Naive thymus-derived CD4-positive, alpha-beta T cell (primary cell): ENCODE measurements at regions of chr5 and their contacts with region 1.

Region 1: DNA sequence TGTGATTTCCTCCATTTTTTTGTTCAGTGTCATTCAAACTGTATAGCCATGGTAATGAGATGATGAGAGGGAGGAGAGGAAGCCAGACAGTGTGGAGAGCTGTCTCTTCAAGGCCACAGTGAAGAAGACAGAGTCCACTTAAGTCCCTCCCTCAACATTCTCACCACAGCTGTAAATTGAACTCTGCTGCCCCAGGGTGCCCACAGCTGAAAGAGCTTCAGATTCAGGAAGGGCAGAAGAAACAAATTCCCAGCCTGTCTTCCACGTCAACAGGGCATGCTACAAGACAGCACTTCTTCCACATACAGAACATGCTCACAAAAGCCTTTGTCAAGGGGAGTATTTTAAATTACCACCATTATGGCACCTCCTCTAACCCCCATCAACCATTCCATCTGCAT is 100.4 kb downstream of the KLHL3 start:
- DNase-seq: no peak
- ATAC-seq: no peak
- H3K4me3 ChIP-seq: no peak overlapping the region
- H3K4me3 Mint-ChIP-seq: no peak overlapping the region
- H3K27ac ChIP-seq: no peak overlapping the region
- H3K27ac Mint-ChIP-seq: peak overlapping the region in 2 of 9 donors; percentile 24 to 28
- H3K4me1 ChIP-seq: no peaks in the 10 kb centered on the region
- H3K4me1 Mint-ChIP-seq: peaks cover 0 to 1% (median 0%) of the 10 kb centered on the region in 7 donors
- H3K27me3 ChIP-seq: no peaks in the 10 kb centered on the region
- H3K27me3 Mint-ChIP-seq: no peaks in the 10 kb centered on the region

Region 2: GRCh38 chr5:137743031-137743640 is 107.6 kb after region 1 on chr5:
- CTCF ChIA-PET with region 1: interaction called, 33 read pairs
- POLR2A ChIA-PET with region 1: no interaction called
- intact Hi-C with region 1: no loop called
- DNase-seq: peak in 8 of 9 donors; percentile 34 to 77 (median 72)
- ATAC-seq: peak; percentile 93
- H3K4me3 ChIP-seq: no peak overlapping the region
- H3K4me3 Mint-ChIP-seq: peak overlapping the region in 1 of 10 donors; percentile 54
- H3K27ac ChIP-seq: no peak overlapping the region
- H3K27ac Mint-ChIP-seq: peak overlapping the region in 2 of 9 donors; percentile 64 to 70
- H3K4me1 ChIP-seq: peaks cover 1 to 12% of the 10 kb centered on the region in 2 donors
- H3K4me1 Mint-ChIP-seq: peaks cover 5 to 32% (median 12%) of the 10 kb centered on the region in 7 donors
- H3K27me3 ChIP-seq: no peaks in the 10 kb centered on the region
- H3K27me3 Mint-ChIP-seq: peaks cover 0 to 3% (median 0%) of the 10 kb centered on the region in 5 donors